Mammary epithelial cell (primary cell): ENCODE measurements at regions of chr3 and their contacts with region 1.

Region 1: DNA sequence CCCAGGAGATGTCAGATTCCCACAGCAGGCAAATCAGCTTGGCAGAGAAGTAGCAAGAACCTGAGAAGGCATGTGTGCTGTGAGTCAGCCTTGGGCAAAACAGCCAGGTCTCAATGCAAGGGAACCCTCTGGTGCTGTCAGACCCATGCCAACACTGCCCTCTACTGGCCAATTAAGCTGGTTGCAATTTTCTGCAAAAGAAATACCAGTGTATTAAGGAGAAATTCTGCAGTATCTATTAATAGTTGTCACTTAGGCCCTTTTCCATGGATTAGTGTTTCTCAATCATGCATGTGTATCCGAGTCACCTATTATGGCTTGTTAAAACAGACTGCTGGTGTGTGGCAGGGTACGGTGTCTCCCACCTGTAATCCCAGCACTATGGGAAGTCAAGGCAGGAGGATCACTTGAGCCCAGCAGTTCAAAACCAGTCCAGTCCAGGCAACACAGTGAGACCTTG is 26.2 kb downstream of the MAP4 start:
- DNase-seq: peak; percentile 82
- H3K4me3 ChIP-seq: no peak overlapping the region
- H3K27ac ChIP-seq: peak overlapping the region; percentile 41
- H3K4me1 ChIP-seq: peaks cover 11% of the 10 kb centered on the region
- H3K27me3 ChIP-seq: no peaks in the 10 kb centered on the region
- CTCF ChIP-seq: peak; percentile 88 to 97

Region 2: GRCh38 chr3:47715928-47716327 is 274.1 kb before region 1 on chr3:
- CTCF ChIA-PET with region 1: no interaction called
- dilution Hi-C with region 1: no loop called
- in situ Hi-C with region 1: no loop called
- intact Hi-C with region 1: no loop called
- DNase-seq: peak; percentile 39
- H3K4me3 ChIP-seq: no peak overlapping the region
- H3K27ac ChIP-seq: no peak overlapping the region
- H3K4me1 ChIP-seq: no peaks in the 10 kb centered on the region
- H3K27me3 ChIP-seq: no peaks in the 10 kb centered on the region
- CTCF ChIP-seq: no peak

Region 3: GRCh38 chr3:47817609-47818008 is 172.4 kb before region 1 on chr3:
- CTCF ChIA-PET with region 1: interaction called, 3 read pairs
- dilution Hi-C with region 1: loop called (anchors 5 kb)
- in situ Hi-C with region 1: no loop called
- intact Hi-C with region 1: no loop called
- DNase-seq: no peak
- H3K4me3 ChIP-seq: no peak overlapping the region
- H3K27ac ChIP-seq: no peak overlapping the region
- H3K4me1 ChIP-seq: no peaks in the 10 kb centered on the region
- H3K27me3 ChIP-seq: no peaks in the 10 kb centered on the region
- CTCF ChIP-seq: no peak

Region 4: DNA sequence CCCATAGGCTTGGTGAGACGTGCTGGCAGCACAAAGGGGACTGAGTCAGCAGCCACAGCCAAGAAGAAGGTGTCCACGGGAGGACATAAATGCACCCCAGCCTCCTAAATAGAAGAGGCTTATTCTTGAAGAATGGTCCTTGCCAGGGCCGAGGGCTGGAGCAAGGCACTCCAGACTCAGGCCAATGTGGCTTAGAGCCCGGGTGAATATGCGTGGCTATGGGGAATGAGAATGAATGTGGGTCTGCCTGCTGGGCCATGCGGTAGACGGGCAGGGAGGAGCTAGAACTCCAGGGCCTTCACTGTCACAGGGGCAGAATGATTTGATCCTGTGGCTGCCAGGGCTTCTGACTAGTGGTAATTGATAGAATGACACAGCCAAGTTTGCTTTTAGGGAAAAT is 153.0 kb before region 1 on chr3:
- CTCF ChIA-PET with region 1: no interaction called
- dilution Hi-C with region 1: no loop called
- in situ Hi-C with region 1: no loop called
- intact Hi-C with region 1: loop called (anchors 1 kb)
- DNase-seq: no peak
- H3K4me3 ChIP-seq: no peak overlapping the region
- H3K27ac ChIP-seq: no peak overlapping the region
- H3K4me1 ChIP-seq: no peaks in the 10 kb centered on the region
- H3K27me3 ChIP-seq: no peaks in the 10 kb centered on the region
- CTCF ChIP-seq: no peak

Region 5: DNA sequence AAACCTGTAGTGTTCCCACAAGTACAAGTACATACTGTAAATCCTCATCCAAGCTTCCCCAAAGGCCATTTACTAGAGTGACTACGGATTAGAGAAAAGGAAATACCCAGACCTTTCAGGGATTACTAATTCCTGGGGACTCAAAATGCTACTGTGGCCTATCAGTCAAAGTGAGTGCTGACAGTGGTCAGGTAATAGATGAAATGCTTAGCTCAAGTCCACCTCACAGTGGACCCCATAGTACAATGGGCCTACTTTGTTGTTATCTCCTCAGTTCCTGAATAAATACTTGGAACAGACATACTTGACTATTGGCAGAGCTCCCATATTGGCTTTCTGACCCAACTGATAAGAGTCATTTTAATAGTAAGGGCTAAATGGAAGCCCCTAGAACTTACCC is 35.4 kb before region 1 on chr3:
- CTCF ChIA-PET with region 1: no interaction called
- dilution Hi-C with region 1: loop called (anchors 5 kb)
- in situ Hi-C with region 1: no loop called
- intact Hi-C with region 1: no loop called
- DNase-seq: no peak
- H3K4me3 ChIP-seq: no peak overlapping the region
- H3K27ac ChIP-seq: no peak overlapping the region
- H3K4me1 ChIP-seq: no peaks in the 10 kb centered on the region
- H3K27me3 ChIP-seq: no peaks in the 10 kb centered on the region
- CTCF ChIP-seq: no peak

Region 6: DNA sequence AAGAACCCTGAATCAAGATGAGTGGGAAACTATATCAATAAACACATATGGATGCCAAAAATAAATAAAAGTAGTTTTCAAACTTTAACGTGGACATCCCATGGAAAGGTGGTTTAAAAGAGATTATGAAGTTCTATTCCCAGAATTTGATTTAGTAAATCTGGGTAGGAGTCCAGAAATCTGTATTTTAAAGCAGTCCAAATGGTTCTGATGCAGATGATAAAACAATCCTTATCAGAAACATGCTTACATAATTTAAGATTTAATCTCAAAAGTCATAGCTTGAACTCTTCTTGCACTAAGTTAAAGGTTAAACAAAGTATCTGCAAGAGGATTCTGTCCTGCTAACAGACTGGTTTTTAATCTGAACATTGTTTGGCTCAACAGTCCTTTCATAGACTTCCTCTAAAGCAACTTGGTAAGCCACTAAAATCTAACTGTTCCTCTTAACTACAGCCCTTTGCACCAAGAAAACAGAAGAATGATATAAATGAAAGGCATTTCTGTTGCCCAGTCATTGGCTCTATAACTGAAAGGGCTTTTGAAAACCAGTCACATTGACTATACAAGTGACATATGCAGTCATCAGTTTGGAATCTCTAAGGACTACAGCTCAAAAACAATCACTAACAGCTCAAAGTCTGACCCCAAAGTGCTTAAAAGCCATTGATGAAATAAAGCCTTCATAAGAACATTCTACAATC is 49.6 kb after region 1 on chr3:
- CTCF ChIA-PET with region 1: no interaction called
- dilution Hi-C with region 1: no loop called
- in situ Hi-C with region 1: no loop called
- intact Hi-C with region 1: no loop called
- DNase-seq: peak; percentile 43
- H3K4me3 ChIP-seq: no peak overlapping the region
- H3K27ac ChIP-seq: peak overlapping the region; percentile 43
- H3K4me1 ChIP-seq: peaks cover 33% of the 10 kb centered on the region
- H3K27me3 ChIP-seq: no peaks in the 10 kb centered on the region
- CTCF ChIP-seq: no peak

Region 7: DNA sequence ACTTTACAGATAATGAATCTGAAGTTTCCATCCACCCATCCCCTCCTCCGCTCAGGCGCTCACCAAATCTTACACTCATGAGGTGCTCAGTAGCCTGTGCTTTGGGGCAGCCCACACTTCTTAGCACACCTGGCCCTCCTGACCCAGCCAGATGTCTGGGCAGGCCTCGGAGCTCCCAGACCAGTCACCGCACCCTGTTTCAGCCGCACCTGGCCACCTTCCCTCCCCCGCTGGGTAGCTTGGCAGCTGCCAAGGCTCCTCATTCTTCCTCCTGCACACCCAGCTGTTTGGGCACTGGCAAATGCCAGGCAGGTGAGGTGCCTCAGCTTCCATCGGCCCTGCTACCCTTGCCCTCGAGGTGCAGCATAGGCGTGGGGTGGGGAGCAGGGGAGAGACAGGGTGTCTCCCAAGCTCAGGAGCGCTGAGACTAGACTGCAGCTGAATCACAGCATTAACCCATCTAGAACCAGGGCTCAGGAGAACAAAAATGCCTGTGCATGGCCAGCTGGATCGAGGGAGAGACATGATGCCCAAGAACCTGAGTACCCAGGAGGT is 152.4 kb after region 1 on chr3:
- CTCF ChIA-PET with region 1: no interaction called
- dilution Hi-C with region 1: loop called (anchors 5 kb)
- in situ Hi-C with region 1: no loop called
- intact Hi-C with region 1: no loop called
- DNase-seq: peak; percentile 90
- H3K4me3 ChIP-seq: no peak overlapping the region
- H3K27ac ChIP-seq: no peak overlapping the region
- H3K4me1 ChIP-seq: peaks cover 13% of the 10 kb centered on the region
- H3K27me3 ChIP-seq: no peaks in the 10 kb centered on the region
- CTCF ChIP-seq: no peak

Region 8: GRCh38 chr3:48188266-48189201 is 198.5 kb after region 1 on chr3 and contains the start of gene CDC25A:
- CTCF ChIA-PET with region 1: no interaction called
- dilution Hi-C with region 1: no loop called
- in situ Hi-C with region 1: no loop called
- intact Hi-C with region 1: no loop called
- DNase-seq: peak; percentile 98
- H3K4me3 ChIP-seq: peak within 1 kb of the TSS; percentile 85 to 97 (median 89)
- H3K27ac ChIP-seq: peak within 1 kb of the TSS; percentile 64
- H3K4me1 ChIP-seq: peaks cover 12% of the 10 kb centered on the region
- H3K27me3 ChIP-seq: no peaks in the 10 kb centered on the region
- CTCF ChIP-seq: no peak
- total RNA-seq, gene CDC25A: 7.3 to 17.8 TPM